ENCODE measurements at regions of chr16 and their contacts with region 1.

Region 1: GRCh38 chr16:70737377-70738082 is 51.7 kb upstream of the MTSS2 start:
- DNase-seq: peak; percentile 57 to 83 (median 82)
- ATAC-seq: peak; percentile 65 to 67
- H3K4me3 ChIP-seq: no peak overlapping the region
- H3K27ac ChIP-seq: peak overlapping the region; percentile 78
- H3K4me1 ChIP-seq: peaks cover 9% of the 10 kb centered on the region
- H3K27me3 ChIP-seq: no peaks in the 10 kb centered on the region

Region 2: GRCh38 chr16:70685938-70686375 is 51.6 kb before region 1 on chr16 and contains the start of gene MTSS2:
- intact Hi-C with region 1: loop called in 3 of 4 experiments (anchors 5 to 10 kb)
- DNase-seq: peak; percentile 86 to 95 (median 94)
- ATAC-seq: peak; percentile 57 to 62
- H3K4me3 ChIP-seq: peak within 1 kb of the TSS; percentile 84
- H3K27ac ChIP-seq: peak within 1 kb of the TSS; percentile 66
- H3K4me1 ChIP-seq: peaks cover 35% of the 10 kb centered on the region
- H3K27me3 ChIP-seq: no peaks in the 10 kb centered on the region
- total RNA-seq, gene MTSS2: 60.4 to 71.2 (median 67.7) TPM

Region 3: GRCh38 chr16:70696355-70696754 is 41.2 kb before region 1 on chr16:
- intact Hi-C with region 1: no loop called
- DNase-seq: no peak
- ATAC-seq: no peak
- H3K4me3 ChIP-seq: no peak overlapping the region
- H3K27ac ChIP-seq: no peak overlapping the region
- H3K4me1 ChIP-seq: peaks cover 34% of the 10 kb centered on the region
- H3K27me3 ChIP-seq: no peaks in the 10 kb centered on the region

Region 4: GRCh38 chr16:70789226-70789926 is 51.8 kb after region 1 on chr16:
- intact Hi-C with region 1: no loop called
- DNase-seq: peak in 2 of 3 donors; percentile 80 to 83
- ATAC-seq: peak; percentile 22 to 27
- H3K4me3 ChIP-seq: no peak overlapping the region
- H3K27ac ChIP-seq: no peak overlapping the region
- H3K4me1 ChIP-seq: no peaks in the 10 kb centered on the region
- H3K27me3 ChIP-seq: no peaks in the 10 kb centered on the region